ENCODE measurements at regions of chr2 and their contacts with region 1.

Region 1: DNA sequence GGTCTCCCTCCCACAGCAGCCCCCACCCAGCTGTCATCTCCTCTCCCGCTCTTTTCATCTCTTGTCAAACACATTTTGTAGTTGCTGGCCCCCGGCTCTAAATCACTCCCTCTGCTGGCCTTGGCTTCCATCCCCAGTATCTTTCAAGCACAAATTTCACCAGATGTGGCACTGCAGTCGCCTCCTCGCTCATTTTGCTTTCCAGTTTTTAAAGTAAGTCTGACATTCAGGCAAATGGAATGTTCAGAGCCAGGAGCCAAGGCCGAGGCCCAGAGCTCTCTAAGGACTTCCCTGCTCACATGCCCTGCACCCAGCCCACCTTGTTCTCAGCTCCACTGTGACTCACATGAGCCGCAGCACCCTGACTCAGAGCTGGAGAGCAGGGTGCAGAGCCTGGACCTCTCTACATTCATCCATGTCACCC is 158.4 kb downstream of the GALNT14 start:
- DNase-seq: peak; percentile 55
- H3K4me3 ChIP-seq: no peak overlapping the region
- H3K27ac ChIP-seq: peak overlapping the region in 1 of 2 experiments; percentile 80; a peak in 2 of 4 replicates
- H3K4me1 ChIP-seq: peaks cover 0 to 57% of the 10 kb centered on the region in 2 experiments; a peak in 2 of 4 replicates
- H3K27me3 ChIP-seq: no peaks in the 10 kb centered on the region
- CTCF ChIP-seq: peak; percentile 11; the same call in 1 of the 2 replicates
- EP300 ChIP-seq: no peak
- RAD21 ChIP-seq: peak; percentile 48

Region 2: GRCh38 chr2:30947686-30948085 is 32.1 kb before region 1 on chr2:
- CTCF ChIA-PET with region 1: interaction called, 12 read pairs
- POLR2A ChIA-PET with region 1: no interaction called
- DNase-seq: no peak
- H3K4me3 ChIP-seq: no peak overlapping the region
- H3K27ac ChIP-seq: no peak overlapping the region
- H3K4me1 ChIP-seq: peaks cover 0 to 8% of the 10 kb centered on the region in 2 experiments; a peak in 1 of 4 replicates
- H3K27me3 ChIP-seq: no peaks in the 10 kb centered on the region
- CTCF ChIP-seq: no peak
- EP300 ChIP-seq: no peak
- RAD21 ChIP-seq: no peak

Region 3: GRCh38 chr2:30958918-30959265 is 20.9 kb before region 1 on chr2:
- CTCF ChIA-PET with region 1: interaction called, 15 read pairs
- POLR2A ChIA-PET with region 1: no interaction called
- DNase-seq: no peak
- H3K4me3 ChIP-seq: no peak overlapping the region
- H3K27ac ChIP-seq: no peak overlapping the region
- H3K4me1 ChIP-seq: peaks cover 0 to 27% of the 10 kb centered on the region in 2 experiments; a peak in 1 of 4 replicates
- H3K27me3 ChIP-seq: no peaks in the 10 kb centered on the region
- CTCF ChIP-seq: no peak
- EP300 ChIP-seq: no peak
- RAD21 ChIP-seq: no peak

Region 4: GRCh38 chr2:31071741-31072140 is 91.9 kb after region 1 on chr2:
- CTCF ChIA-PET with region 1: no interaction called
- POLR2A ChIA-PET with region 1: no interaction called
- DNase-seq: no peak
- H3K4me3 ChIP-seq: no peak overlapping the region
- H3K27ac ChIP-seq: no peak overlapping the region
- H3K4me1 ChIP-seq: peaks cover 0 to 7% of the 10 kb centered on the region in 2 experiments; a peak in 1 of 4 replicates
- H3K27me3 ChIP-seq: no peaks in the 10 kb centered on the region
- CTCF ChIP-seq: no peak
- EP300 ChIP-seq: no peak
- RAD21 ChIP-seq: no peak